Activated CD4-positive, alpha-beta T cell treated with anti-CD3 and anti-CD28 coated beads, Interleukin-2, amount 10 ng/mL, durations not matched to agents 24 days and 14 days (primary cell): ENCODE measurements at regions of chr13 and their contacts with region 1.

Region 1: DNA sequence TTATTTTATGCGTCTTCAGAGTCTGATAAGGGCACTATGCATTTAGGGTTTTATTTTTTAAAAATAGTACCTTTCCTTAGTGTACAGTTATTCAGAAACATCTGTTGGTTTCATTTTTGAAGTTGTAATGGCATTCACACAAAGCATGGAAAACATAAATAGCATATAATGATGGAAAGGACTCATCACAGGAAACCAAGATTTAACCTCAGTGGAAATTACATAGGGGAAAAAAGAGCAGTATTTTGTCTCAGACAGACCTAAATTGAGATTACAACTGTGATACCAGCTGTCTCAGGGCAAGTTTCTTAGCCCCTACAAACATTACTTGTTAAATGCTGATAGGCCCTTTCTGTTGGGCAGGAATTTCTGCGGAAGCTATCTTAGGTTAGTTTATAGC is 57.2 kb downstream of the NHLRC3 start:
- DNase-seq: peak; percentile 57
- H3K4me3 Mint-ChIP-seq: peak overlapping the region; percentile 46
- H3K27ac Mint-ChIP-seq: peak overlapping the region; percentile 96
- H3K4me1 Mint-ChIP-seq: peaks cover 32% of the 10 kb centered on the region
- H3K27me3 Mint-ChIP-seq: no peaks in the 10 kb centered on the region

Region 2: DNA sequence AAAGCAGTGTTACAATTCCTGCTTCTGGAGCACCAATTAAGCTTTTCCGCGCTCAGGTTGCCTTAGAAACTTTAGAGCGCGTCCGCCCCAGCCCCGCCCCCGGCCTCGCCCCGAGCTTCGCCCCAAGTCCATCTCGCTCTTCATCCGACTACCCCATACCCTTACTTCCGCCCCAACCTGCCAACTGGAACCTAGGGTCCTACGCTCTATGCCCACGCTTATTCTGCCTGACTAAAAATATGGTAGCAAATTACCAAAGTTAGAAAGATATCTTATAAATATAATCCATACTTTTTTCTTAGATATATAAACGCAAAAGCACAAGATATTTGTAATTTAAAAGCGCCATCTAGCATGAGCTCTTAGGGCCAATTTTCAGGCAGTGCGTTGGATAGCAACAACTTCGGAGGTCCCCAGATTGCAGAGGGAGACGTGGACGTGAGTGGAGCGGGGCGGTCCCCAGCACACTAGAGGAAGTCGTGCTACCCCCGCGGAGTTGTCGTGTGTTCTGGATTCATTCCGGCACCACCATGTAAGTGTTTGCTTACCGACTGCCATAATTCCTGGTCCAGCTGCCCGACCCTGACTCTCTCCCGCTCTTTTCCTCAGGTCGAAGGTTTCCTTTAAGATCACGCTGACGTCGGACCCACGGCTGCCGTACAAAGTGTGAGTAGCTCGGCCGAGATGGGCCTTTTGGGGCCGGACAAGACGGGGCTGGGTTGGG is 745.9 kb before region 1 on chr13 and contains the start of gene UFM1:
- intact Hi-C with region 1: loop called (anchors 2 kb)
- DNase-seq: peak; percentile 95
- H3K4me3 Mint-ChIP-seq: peak within 1 kb of the TSS; percentile 99
- H3K27ac Mint-ChIP-seq: peak within 1 kb of the TSS; percentile 99
- H3K4me1 Mint-ChIP-seq: peaks cover 34% of the 10 kb centered on the region
- H3K27me3 Mint-ChIP-seq: no peaks in the 10 kb centered on the region
- total RNA-seq, gene UFM1: 63.5 and 69.4 TPM in 2 replicates

Region 3: DNA sequence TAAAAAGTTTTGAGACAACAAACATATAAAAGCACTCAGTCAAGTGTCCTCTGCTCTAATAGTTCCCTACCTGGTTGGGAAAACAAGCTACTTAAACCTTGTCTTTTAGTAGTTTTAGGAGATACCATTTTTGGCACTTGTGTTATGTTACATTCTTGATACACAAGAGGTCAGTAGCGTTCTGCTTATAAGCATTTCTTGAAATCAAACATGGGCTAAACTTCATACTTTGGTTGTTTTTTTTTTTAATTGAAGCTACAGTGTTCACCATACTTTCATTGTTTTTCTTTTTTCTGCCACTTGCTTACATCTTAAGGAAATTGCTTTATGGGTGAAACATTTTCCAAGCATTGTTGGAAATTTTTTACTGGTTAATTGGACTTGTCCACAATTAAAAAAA is 44.3 kb before region 1 on chr13:
- intact Hi-C with region 1: loop called (anchors 5 kb)
- DNase-seq: no peak
- H3K4me3 Mint-ChIP-seq: no peak overlapping the region
- H3K27ac Mint-ChIP-seq: no peak overlapping the region
- H3K4me1 Mint-ChIP-seq: peaks cover 2% of the 10 kb centered on the region
- H3K27me3 Mint-ChIP-seq: no peaks in the 10 kb centered on the region

Region 4: DNA sequence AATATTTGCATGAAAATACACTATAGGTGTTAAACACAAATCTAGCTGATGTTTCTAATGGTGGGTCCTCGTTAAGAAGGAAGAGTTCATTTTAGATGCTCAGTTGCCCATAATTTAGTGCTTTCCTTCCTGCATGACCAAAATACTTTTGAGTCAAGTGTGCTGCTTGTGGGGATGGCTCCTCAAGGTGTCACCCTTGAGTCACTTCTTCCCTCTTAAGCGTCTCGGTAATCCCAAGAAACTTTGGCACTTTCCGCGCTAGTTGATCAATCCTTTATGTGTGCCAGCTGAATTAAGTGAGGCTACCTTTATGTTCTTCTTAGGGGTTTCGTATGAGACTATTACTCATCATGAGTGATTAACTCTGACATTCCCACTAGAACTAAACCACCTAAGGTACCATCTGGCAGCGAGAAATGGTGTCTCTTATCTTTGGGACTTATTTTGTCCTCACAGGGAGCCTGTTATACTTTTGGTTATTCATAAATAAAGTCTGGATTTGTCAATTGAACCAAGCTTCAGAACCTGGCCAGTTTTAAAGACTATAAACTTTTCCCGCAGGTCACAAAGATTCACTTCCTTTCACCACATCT is 49.5 kb after region 1 on chr13:
- intact Hi-C with region 1: loop called (anchors 5 kb)
- DNase-seq: peak; percentile 70
- H3K4me3 Mint-ChIP-seq: no peak overlapping the region
- H3K27ac Mint-ChIP-seq: no peak overlapping the region
- H3K4me1 Mint-ChIP-seq: peaks cover 14% of the 10 kb centered on the region
- H3K27me3 Mint-ChIP-seq: peaks cover 26% of the 10 kb centered on the region

Region 5: DNA sequence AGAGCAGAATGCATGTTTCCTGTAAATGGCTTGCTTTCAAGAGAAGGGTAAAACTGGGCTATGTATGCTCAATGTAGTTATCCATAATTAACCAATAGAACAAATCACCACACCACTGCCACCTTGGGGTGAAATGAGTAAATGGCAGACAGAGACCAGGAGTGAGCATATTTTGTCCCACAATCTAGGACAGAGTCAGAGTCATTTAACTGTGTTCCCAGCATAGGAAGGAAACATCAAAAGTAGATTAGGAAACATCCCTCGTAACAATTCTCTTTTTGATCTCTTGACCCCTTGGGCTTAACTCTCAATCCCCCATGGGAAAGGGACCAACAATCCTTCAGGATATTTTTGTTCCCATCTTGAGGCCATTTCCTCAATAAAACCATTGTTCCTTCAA is 167.5 kb after region 1 on chr13:
- intact Hi-C with region 1: loop called (anchors 2 kb)
- DNase-seq: peak; percentile 80
- H3K4me3 Mint-ChIP-seq: no peak overlapping the region
- H3K27ac Mint-ChIP-seq: no peak overlapping the region
- H3K4me1 Mint-ChIP-seq: peaks cover 12% of the 10 kb centered on the region
- H3K27me3 Mint-ChIP-seq: peaks cover 5% of the 10 kb centered on the region